Heart left ventricle (tissue), 16 donors: ENCODE measurements at regions of chr20 and their contacts with region 1.

Region 1: DNA sequence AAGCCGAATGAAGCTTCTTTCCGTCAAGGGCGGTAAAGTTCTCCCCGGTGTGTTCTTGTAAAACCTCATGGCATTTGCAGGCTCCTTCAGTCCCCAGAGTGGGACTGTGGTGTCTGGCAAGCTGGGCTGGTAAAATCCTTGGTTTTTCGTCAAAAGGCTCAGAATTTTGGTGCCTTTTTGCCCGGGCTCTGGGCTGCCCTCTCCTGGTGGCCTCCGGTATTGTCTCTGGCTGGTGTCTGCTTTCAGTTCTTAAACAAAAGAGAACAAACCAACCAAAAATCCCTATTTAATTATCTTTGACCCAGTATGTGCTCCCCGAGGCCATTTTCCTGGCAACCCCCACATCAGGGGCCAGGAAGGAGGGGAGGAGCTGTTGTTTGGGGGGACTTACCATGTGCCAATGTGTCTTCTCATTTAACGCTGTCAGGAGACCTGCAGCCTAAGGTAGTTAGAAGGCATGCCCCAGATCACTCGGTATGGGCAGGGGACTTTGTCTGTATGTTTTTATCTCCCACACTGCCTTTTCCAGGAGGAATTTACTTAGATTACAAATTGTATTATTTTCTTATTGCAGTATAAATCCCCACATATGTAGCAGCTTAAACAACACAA is 11.1 kb downstream of the CDH4 start:
- DNase-seq: no peak
- ATAC-seq: no peak
- H3K4me3 ChIP-seq: no peak overlapping the region
- H3K27ac ChIP-seq: no peak overlapping the region
- H3K4me1 ChIP-seq: no peaks in the 10 kb centered on the region
- H3K27me3 ChIP-seq: peaks cover 0 to 61% (median 0%) of the 10 kb centered on the region in 9 donors
- CTCF ChIP-seq: peak; percentile 43 to 75 (median 66)
- POLR2A ChIP-seq: no peak

Region 2: DNA sequence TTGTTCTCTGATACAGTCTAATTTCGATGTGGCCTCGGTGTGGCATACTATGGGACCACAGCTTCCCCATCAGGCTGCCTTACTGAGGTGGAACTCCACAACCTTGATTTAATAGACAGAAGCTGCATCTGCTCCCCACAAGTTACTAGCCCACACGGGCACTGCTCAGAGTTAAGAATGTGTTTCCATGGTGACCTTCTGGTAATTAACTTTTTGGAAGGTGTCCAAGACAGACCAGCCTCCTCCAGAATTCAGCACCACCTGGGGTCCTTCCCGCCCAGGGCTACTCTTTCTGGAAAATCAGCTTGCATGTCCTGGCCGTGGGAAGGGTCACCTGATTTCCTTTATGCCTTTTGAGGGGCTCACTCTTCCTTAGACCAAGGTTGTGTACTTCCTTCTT is 59.9 kb before region 1 on chr20:
- intact Hi-C with region 1: no loop called
- DNase-seq: no peak
- ATAC-seq: no peak
- H3K4me3 ChIP-seq: no peak overlapping the region
- H3K27ac ChIP-seq: no peak overlapping the region
- H3K4me1 ChIP-seq: no peaks in the 10 kb centered on the region
- H3K27me3 ChIP-seq: peaks cover 0 to 32% (median 2%) of the 10 kb centered on the region in 9 donors
- CTCF ChIP-seq: no peak
- POLR2A ChIP-seq: no peak

Region 3: DNA sequence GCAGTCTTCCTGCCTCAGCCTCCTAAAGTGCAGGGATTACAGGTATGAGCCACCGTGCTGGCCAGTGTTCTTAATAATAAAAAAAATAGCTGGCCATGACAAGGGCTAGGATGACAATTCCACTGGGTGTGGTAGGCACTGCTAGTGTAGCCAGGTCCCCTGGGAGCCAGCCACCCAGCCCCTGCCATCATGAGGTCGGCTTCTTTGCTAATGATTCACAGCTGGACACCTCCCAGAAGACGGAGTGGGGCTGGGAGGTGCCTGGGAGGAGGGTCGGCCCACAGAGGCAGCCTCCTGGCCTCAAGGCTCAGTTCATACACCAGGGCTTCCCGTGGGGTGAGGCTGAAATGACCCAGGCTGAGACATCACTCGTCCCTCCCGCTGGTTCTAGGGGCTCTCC is 572.1 kb after region 1 on chr20:
- intact Hi-C with region 1: no loop called
- DNase-seq: peak in 2 of 5 donors; percentile 5 to 44
- ATAC-seq: no peak
- H3K4me3 ChIP-seq: no peak overlapping the region
- H3K27ac ChIP-seq: no peak overlapping the region
- H3K4me1 ChIP-seq: no peaks in the 10 kb centered on the region
- H3K27me3 ChIP-seq: peaks cover 0 to 26% (median 6%) of the 10 kb centered on the region in 9 donors
- CTCF ChIP-seq: no peak
- POLR2A ChIP-seq: no peak

Region 4: GRCh38 chr20:61874501-61875026 is 611.4 kb after region 1 on chr20:
- intact Hi-C with region 1: loop called in 1 of 10 experiments (anchors 5 kb)
- DNase-seq: peak in 2 of 5 donors; percentile 55 to 67
- ATAC-seq: peak in 3 of 4 donors; percentile 47 to 84 (median 80)
- H3K4me3 ChIP-seq: no peak overlapping the region
- H3K27ac ChIP-seq: no peak overlapping the region
- H3K4me1 ChIP-seq: no peaks in the 10 kb centered on the region
- H3K27me3 ChIP-seq: peaks cover 0 to 23% (median 0%) of the 10 kb centered on the region in 9 donors
- CTCF ChIP-seq: peak in 6 of 12 donors; percentile 20 to 36 (median 30)
- POLR2A ChIP-seq: no peak